K562 (cell line): ENCODE measurements at regions of chr4 and their contacts with region 1.

Region 1: DNA sequence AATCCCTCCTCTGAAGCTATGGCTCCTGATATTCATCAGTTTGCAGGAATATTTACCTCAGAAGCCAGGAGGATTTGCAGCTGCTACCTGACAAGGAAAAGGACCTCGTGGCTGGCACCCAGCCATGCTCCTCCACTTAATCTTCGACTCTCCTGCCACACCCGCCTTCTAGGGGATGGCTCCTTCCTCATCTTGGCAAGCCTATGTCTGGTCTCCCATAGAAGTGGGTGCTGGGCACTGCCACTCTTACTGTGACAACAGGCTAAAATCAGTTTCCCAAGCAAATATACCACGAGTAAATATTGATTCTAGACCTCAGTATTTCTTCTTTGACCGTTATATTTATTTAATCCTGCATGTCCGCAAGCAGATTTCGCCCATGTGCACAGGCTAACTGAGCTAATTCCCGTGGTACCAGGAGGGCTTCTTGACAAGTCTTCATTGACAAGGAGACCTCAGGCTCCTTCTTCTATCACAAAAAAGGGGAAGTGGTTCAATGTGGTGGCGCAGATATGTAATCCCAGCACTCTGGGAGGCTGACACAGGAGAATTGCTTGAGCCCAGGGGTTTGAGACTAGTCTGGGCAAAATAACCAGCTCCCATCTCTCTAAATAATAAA is 52.6 kb upstream of the DCTD start:
- DNase-seq: peak; percentile 10 to 82 (median 36)
- ATAC-seq: peak; percentile 89
- H3K4me3 ChIP-seq: peak overlapping the region; percentile 34
- H3K27ac ChIP-seq: peak overlapping the region; percentile 89
- H3K4me1 ChIP-seq: peaks cover 9 to 12% of the 10 kb centered on the region in 2 experiments
- H3K27me3 ChIP-seq: no peaks in the 10 kb centered on the region
- CTCF ChIP-seq: no peak
- EP300 ChIP-seq: peak; percentile 80
- POLR2A ChIP-seq: no peak
- RAD21 ChIP-seq: no peak

Region 2: GRCh38 chr4:183029375-183029774 is 59.6 kb after region 1 on chr4:
- CTCF ChIA-PET with region 1: no interaction called
- POLR2A ChIA-PET with region 1: no interaction called
- in situ Hi-C with region 1: no loop called
- intact Hi-C with region 1: loop called (anchors 2 kb)
- DNase-seq: no peak
- ATAC-seq: no peak; the same call in 2 of the 3 replicates
- H3K4me3 ChIP-seq: no peak overlapping the region
- H3K27ac ChIP-seq: peak overlapping the region; percentile 4; the same call in 1 of the 3 replicates
- H3K4me1 ChIP-seq: peaks cover 11 to 34% of the 10 kb centered on the region in 2 experiments; a peak in 3 of 5 replicates
- H3K27me3 ChIP-seq: no peaks in the 10 kb centered on the region
- CTCF ChIP-seq: no peak
- EP300 ChIP-seq: peak; percentile 24; the same call in 1 of the 2 replicates
- POLR2A ChIP-seq: no peak
- RAD21 ChIP-seq: no peak